Cardiac septum (tissue), 1 donor: ENCODE measurements at regions of chr1 and their contacts with region 1.

Region 1: DNA sequence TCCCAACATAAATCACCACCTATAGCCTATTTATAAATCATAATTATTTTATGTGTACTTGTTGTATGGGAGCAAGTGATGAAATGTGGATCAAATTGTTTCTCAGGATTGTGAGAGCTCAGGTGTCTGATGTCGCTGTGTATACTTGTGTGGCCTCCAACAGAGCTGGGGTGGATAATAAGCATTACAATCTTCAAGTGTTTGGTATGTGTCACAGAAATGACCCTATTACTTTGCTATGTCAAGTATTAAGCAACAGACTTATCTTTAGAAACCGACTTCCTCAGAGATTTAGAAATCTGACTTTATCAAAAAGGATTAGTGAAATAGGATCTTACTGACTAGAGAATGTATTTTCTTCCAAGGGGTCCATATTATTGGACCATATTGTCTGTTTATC is 280.9 kb downstream of the TPR start:
- DNase-seq: no peak

Region 2: GRCh38 chr1:186009039-186009737 is 85.0 kb before region 1 on chr1:
- intact Hi-C with region 1: loop called (anchors 5 kb)
- DNase-seq: no peak

Region 3: GRCh38 chr1:186042216-186042615 is 52.0 kb before region 1 on chr1:
- intact Hi-C with region 1: no loop called
- DNase-seq: no peak